Heart left ventricle (tissue), 16 donors: ENCODE measurements at regions of chr6 and their contacts with region 1.

Region 1: GRCh38 chr6:121951918-121952379 is 447.5 kb upstream of the HSF2 start:
- DNase-seq: no peak
- ATAC-seq: peak in 1 of 4 donors; percentile 50
- H3K4me3 ChIP-seq: no peak overlapping the region
- H3K27ac ChIP-seq: no peak overlapping the region
- H3K4me1 ChIP-seq: peaks cover 0 to 2% (median 0%) of the 10 kb centered on the region in 12 donors
- H3K27me3 ChIP-seq: no peaks in the 10 kb centered on the region
- CTCF ChIP-seq: no peak
- POLR2A ChIP-seq: no peak

Region 2: DNA sequence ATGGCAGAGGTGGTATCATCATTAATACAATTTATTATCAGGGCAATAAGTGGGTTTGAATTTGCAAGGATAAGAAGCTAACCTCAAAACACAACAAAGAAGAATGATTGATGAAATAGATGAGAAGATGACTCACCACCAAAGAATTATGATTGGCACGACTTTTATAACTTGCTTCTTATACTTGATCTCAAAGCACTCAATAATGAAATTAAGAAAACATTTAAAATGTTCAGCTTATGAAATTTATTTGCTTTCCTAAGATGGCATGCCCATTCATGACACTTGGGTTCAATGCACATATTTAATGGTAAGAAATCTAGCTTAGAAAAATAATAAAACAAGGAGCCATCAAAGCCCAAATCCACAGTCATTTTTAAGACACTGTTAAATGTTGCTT is 39.0 kb before region 1 on chr6:
- intact Hi-C with region 1: loop called in 1 of 10 experiments (anchors 5 kb)
- DNase-seq: no peak
- ATAC-seq: no peak
- H3K4me3 ChIP-seq: no peak overlapping the region
- H3K27ac ChIP-seq: no peak overlapping the region
- H3K4me1 ChIP-seq: no peaks in the 10 kb centered on the region
- H3K27me3 ChIP-seq: no peaks in the 10 kb centered on the region
- CTCF ChIP-seq: no peak
- POLR2A ChIP-seq: no peak

Region 3: DNA sequence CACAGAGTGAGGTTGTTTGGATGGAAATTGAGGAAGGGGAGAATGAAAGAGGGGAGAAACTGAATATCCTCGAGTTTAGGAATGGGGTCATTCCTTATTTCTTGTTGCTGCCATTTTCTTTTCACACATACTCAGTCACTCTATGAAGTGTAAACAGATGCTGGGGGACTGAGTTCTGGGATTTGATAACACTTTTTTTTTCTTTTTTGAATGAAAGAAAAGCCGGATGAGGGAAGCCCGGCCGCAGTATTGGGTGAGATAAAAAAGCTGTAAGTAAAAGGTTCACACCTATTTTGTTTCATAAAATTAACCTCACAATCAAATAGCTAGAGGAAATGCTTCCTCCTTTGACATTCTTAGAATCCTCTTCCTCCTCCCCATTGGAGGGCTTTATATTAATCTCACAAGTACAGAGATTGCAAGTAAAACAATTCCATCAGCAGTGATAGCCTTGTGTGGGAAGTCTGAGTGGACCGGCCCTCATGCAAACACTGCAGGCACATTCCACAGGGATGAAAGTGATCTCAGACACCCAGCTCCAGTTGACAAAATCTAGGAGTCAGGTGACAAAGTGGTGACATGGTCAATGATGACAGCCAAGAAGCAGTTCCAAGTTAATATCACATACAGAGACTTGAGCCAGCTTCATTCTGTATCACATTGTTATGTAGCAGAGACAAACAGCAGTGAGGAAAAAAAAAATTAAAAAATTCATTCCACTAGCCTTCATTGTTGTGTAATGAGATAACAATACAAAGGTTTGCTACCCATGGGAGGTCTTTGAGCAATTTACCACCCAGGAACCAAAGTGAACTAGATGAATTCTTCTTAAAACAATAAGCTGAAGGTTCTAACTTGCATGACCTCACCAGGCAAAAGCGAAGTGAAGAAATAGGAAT is 56.4 kb after region 1 on chr6:
- intact Hi-C with region 1: no loop called
- DNase-seq: peak in 4 of 5 donors; percentile 59 to 68 (median 68)
- ATAC-seq: peak; percentile 96 to 99 (median 98)
- H3K4me3 ChIP-seq: no peak overlapping the region
- H3K27ac ChIP-seq: peak overlapping the region; percentile 52 to 88 (median 66)
- H3K4me1 ChIP-seq: peaks cover 0 to 19% (median 10%) of the 10 kb centered on the region in 12 donors
- H3K27me3 ChIP-seq: no peaks in the 10 kb centered on the region
- CTCF ChIP-seq: no peak
- POLR2A ChIP-seq: no peak